Activated CD4-positive, alpha-beta T cell treated with anti-CD3 and anti-CD28 coated beads, Interleukin-2, amount 10 ng/mL, durations not matched to agents 7 days and 5 days (primary cell): ENCODE measurements at regions of chr1 and their contacts with region 1.

Region 1: DNA sequence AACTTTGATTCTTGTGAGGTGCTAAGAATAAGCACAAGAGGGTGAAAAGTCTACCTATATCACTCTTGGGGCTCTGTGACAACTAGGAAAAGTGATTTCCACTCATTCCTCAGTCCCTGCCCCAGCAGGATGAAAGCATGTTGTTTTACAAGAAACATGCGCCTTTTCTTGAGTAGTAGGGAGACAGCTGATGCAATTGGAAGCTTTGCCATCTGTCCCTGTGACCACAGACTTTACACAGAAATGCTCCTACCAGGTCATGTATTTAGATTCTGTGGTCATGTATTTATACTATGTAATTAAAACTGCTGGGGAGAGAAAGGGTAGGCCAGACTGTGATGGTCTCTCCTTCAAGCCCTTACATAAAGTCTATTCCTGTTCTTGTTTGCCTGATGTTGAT is 445.5 kb downstream of the PTPRC start:
- DNase-seq: no peak
- H3K4me3 Mint-ChIP-seq: no peak overlapping the region
- H3K27ac Mint-ChIP-seq: no peak overlapping the region
- H3K4me1 Mint-ChIP-seq: peaks cover 21% of the 10 kb centered on the region
- H3K27me3 Mint-ChIP-seq: peaks cover 3% of the 10 kb centered on the region

Region 2: DNA sequence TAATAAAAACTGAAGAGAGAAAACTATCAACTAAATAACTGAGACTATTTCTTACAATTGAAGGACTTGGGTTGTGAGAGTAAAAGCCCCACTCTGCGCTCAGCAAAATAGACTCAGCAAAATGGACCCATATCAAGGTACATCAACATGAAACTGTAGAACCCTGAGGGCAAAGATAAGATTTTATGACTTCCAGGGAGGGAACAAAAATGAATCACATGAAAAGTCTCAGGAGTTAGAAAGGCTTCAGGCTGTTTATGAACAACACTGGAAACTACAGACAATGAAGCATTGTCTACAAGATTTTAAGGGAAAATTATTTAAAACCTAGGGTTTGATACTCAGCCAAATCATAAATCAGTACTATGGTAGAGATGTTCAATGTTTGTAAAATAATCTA is 11.1 kb before region 1 on chr1:
- CTCF ChIA-PET with region 1: interaction called, 19 read pairs
- POLR2A ChIA-PET with region 1: no interaction called
- DNase-seq: no peak
- H3K4me3 Mint-ChIP-seq: no peak overlapping the region
- H3K27ac Mint-ChIP-seq: peak overlapping the region; percentile 0
- H3K4me1 Mint-ChIP-seq: peaks cover 11% of the 10 kb centered on the region
- H3K27me3 Mint-ChIP-seq: no peaks in the 10 kb centered on the region

Region 3: DNA sequence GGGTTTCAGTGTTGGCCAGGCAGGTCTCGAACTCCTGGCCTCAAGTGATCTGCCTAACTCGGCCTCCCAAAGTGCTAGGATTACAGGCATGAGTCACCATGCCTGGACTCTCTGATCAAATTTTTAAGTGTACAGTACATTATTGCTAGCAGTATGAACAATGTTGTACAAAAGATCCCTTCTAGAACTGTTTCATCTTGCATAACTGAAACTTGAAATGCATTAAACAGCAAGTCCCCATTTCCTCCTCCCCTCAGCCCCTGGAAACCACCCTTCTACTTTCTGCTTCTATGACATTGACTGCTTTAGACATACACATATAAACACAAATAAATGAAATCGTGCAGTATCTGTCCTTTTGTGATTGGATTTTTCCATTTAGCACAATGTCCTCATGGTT is 17.9 kb after region 1 on chr1:
- CTCF ChIA-PET with region 1: no interaction called
- POLR2A ChIA-PET with region 1: no interaction called
- DNase-seq: no peak
- H3K4me3 Mint-ChIP-seq: no peak overlapping the region
- H3K27ac Mint-ChIP-seq: no peak overlapping the region
- H3K4me1 Mint-ChIP-seq: peaks cover 5% of the 10 kb centered on the region
- H3K27me3 Mint-ChIP-seq: no peaks in the 10 kb centered on the region